H1 (cell line): ENCODE measurements at regions of chr6 and their contacts with region 1.

Region 1: GRCh38 chr6:129981598-129981997 is 36.8 kb upstream of the L3MBTL3 start:
- DNase-seq: no peak
- H3K4me3 ChIP-seq: no peak overlapping the region
- H3K27ac ChIP-seq: no peak overlapping the region
- H3K4me1 ChIP-seq: no peaks in the 10 kb centered on the region
- H3K27me3 ChIP-seq: no peaks in the 10 kb centered on the region
- CTCF ChIP-seq: peak in 2 of 3 experiments; percentile 9 to 11; a peak in 2 of 4 replicates
- EP300 ChIP-seq: no peak
- POLR2A ChIP-seq: no peak
- RAD21 ChIP-seq: peak; percentile 36 to 43; a peak in 2 of 4 replicates

Region 2: DNA sequence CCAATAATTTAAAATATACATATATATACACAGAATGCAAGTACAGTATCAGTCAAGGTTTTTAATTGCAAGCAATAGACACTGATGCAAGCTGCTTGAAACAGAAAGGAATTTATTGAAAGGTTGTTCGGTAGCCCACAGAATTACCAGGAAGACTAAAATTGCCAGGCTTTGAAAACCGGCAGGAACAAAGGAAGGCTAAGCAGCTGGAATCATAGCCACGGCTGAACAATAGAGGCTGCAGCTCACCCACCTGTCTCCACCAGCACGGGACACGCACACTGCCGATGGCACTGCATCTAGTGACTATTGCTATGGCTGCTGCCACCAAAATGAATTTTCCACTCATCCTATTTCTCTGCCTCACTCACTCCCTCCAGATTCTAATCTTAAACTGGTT is 14.8 kb after region 1 on chr6:
- CTCF ChIA-PET with region 1: interaction called, 11 read pairs
- POLR2A ChIA-PET with region 1: no interaction called
- DNase-seq: no peak
- H3K4me3 ChIP-seq: no peak overlapping the region
- H3K27ac ChIP-seq: no peak overlapping the region
- H3K4me1 ChIP-seq: peaks cover 0 to 10% (median 6%) of the 10 kb centered on the region in 4 experiments; a peak in 4 of 7 replicates
- H3K27me3 ChIP-seq: no peaks in the 10 kb centered on the region
- CTCF ChIP-seq: no peak
- EP300 ChIP-seq: no peak
- POLR2A ChIP-seq: no peak
- RAD21 ChIP-seq: no peak